HepG2 (cell line): ENCODE measurements at regions of chr7 and their contacts with region 1.

Region 1: GRCh38 chr7:143263266-143264195 is at the start of gene GSTK1:
- DNase-seq: peak; percentile 66
- ATAC-seq: peak; percentile 99
- H3K4me3 ChIP-seq: peak within 1 kb of the TSS; percentile 80 to 94 (median 94)
- H3K27ac ChIP-seq: peak within 1 kb of the TSS; percentile 92
- H3K4me1 ChIP-seq: peaks cover 41% of the 10 kb centered on the region
- H3K27me3 ChIP-seq: no peaks in the 10 kb centered on the region; a peak in 1 of 5 replicates
- CTCF ChIP-seq: peak; percentile 32
- EP300 ChIP-seq: peak in 1 of 2 experiments; percentile 22; a peak in 1 of 4 replicates
- POLR2A ChIP-seq: peak; percentile 88 to 98
- RAD21 ChIP-seq: peak; percentile 22
- total RNA-seq, gene GSTK1: 31.5 and 64.6 TPM in 2 replicates

Region 2: GRCh38 chr7:143248761-143249354 is 14.7 kb before region 1 on chr7:
- CTCF ChIA-PET with region 1: no interaction called
- POLR2A ChIA-PET with region 1: interaction called, 26 read pairs
- in situ Hi-C with region 1: no loop called
- intact Hi-C with region 1: loop called (anchors 2 kb)
- DNase-seq: peak; percentile 78
- ATAC-seq: peak; percentile 99
- H3K4me3 ChIP-seq: no peak overlapping the region
- H3K27ac ChIP-seq: peak overlapping the region; percentile 44
- H3K4me1 ChIP-seq: peaks cover 22% of the 10 kb centered on the region
- H3K27me3 ChIP-seq: no peaks in the 10 kb centered on the region
- CTCF ChIP-seq: no peak
- EP300 ChIP-seq: no peak; a peak in 1 of 4 replicates
- POLR2A ChIP-seq: no peak
- RAD21 ChIP-seq: no peak

Region 3: DNA sequence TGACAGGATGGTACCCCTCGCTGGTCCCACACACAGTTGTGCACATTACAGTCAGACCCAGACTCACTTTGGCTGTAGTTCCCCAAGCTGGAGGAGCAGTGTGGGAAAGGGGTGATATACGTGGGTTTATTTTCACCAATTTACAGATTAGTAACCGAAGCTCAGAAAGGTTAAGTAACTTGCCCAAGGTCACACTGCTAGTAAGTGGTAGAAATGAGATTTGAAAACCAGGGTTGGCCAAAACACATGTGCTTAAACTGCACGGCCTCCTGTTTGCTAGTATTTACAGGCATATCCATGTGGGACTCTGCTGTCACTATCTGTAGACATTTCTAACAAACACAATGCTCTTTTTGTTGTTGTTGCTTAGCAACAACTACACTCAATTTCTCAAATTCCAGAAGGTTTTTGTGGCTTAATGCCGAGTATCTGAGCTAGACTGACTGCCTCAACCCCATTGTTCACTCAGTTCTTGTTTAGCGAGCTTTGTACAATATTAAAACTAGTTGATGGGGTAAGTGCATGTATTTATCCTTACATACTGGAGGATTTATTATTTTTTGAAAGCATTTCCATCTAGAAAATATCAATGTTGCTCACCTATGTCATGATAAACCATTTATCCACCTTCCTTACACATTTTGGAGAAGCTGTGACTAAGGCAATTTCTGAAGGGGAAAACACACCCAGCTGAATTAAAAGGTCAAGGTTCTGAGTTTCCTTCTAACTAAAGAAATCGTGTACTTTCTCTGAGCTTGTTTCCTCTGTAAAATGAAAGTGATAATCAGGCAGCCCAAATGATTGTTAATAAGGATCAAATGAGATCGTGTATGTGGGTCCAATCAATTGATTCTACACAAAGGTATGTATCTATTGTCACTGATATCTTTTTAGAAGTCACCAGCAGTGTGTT is 15.9 kb after region 1 on chr7:
- CTCF ChIA-PET with region 1: no interaction called
- POLR2A ChIA-PET with region 1: interaction called, 21 read pairs
- in situ Hi-C with region 1: no loop called
- intact Hi-C with region 1: loop called (anchors 2 kb)
- DNase-seq: peak; percentile 80
- ATAC-seq: peak; percentile 75
- H3K4me3 ChIP-seq: peak overlapping the region in 1 of 3 experiments; percentile 14; a peak in 1 of 6 replicates
- H3K27ac ChIP-seq: peak overlapping the region; percentile 40
- H3K4me1 ChIP-seq: peaks cover 29% of the 10 kb centered on the region
- H3K27me3 ChIP-seq: no peaks in the 10 kb centered on the region
- CTCF ChIP-seq: no peak
- EP300 ChIP-seq: no peak
- POLR2A ChIP-seq: no peak
- RAD21 ChIP-seq: no peak

Region 4: GRCh38 chr7:143510854-143511592 is 247.5 kb after region 1 on chr7:
- CTCF ChIA-PET with region 1: no interaction called
- POLR2A ChIA-PET with region 1: no interaction called
- in situ Hi-C with region 1: no loop called
- intact Hi-C with region 1: no loop called
- DNase-seq: no peak
- ATAC-seq: no peak
- H3K4me3 ChIP-seq: no peak overlapping the region
- H3K27ac ChIP-seq: no peak overlapping the region
- H3K4me1 ChIP-seq: no peaks in the 10 kb centered on the region
- H3K27me3 ChIP-seq: peaks cover 0 to 4% of the 10 kb centered on the region in 2 experiments; a peak in 1 of 5 replicates
- CTCF ChIP-seq: no peak
- EP300 ChIP-seq: no peak
- POLR2A ChIP-seq: no peak
- RAD21 ChIP-seq: no peak